ENCODE measurements at regions of chr1 and their contacts with region 1.

Region 1: GRCh38 chr1:208245185-208245705 is 1.1 kb upstream of the PLXNA2 start:
- DNase-seq: peak; percentile 89 to 98 (median 94)
- H3K4me3 ChIP-seq: peak overlapping the region in 2 of 4 donors; percentile 50 to 90
- H3K27ac ChIP-seq: peak overlapping the region in 3 of 5 donors; percentile 48 to 95 (median 83)
- H3K4me1 ChIP-seq: peaks cover 0 to 19% of the 10 kb centered on the region in 2 donors
- H3K27me3 ChIP-seq: no peaks in the 10 kb centered on the region
- CTCF ChIP-seq: peak; percentile 74 to 91 (median 84)
- POLR2A ChIP-seq: peak in 1 of 2 donors; percentile 21

Region 2: DNA sequence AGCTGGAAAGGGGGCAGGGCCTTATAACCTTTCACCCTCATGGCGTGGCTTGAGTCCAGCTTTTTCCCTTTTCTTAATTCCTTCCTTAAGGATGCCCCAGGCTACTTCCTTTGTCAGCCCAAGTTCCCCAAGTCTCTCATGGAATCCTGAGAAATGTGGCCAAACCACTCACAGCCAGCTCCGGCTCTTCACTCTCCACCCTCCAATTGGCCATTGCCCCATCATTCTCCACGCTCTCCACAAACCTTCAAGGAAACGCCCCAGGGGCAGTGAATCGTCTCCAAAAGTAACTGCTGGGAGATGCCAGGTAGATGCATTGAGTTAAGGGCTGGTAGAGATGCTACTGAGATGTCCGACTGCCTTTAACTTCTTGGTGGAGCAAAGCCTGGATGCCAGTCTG is 220.8 kb before region 1 on chr1:
- intact Hi-C with region 1: loop called (anchors 5 kb)
- DNase-seq: no peak
- H3K4me3 ChIP-seq: no peak overlapping the region
- H3K27ac ChIP-seq: no peak overlapping the region
- H3K4me1 ChIP-seq: peaks cover 0 to 4% of the 10 kb centered on the region in 2 donors
- H3K27me3 ChIP-seq: no peaks in the 10 kb centered on the region
- CTCF ChIP-seq: no peak
- POLR2A ChIP-seq: no peak

Region 3: GRCh38 chr1:208029381-208030287 is 215.6 kb before region 1 on chr1:
- intact Hi-C with region 1: loop called (anchors 5 kb)
- DNase-seq: peak in 1 of 7 donors; percentile 17
- H3K4me3 ChIP-seq: no peak overlapping the region
- H3K27ac ChIP-seq: peak overlapping the region in 2 of 5 donors; percentile 26 to 41
- H3K4me1 ChIP-seq: peaks cover 0 to 22% of the 10 kb centered on the region in 2 donors
- H3K27me3 ChIP-seq: no peaks in the 10 kb centered on the region
- CTCF ChIP-seq: no peak
- POLR2A ChIP-seq: no peak

Region 4: GRCh38 chr1:208132287-208132883 is 112.9 kb before region 1 on chr1:
- intact Hi-C with region 1: loop called (anchors 2 to 5 kb)
- DNase-seq: peak; percentile 66 to 84 (median 77)
- H3K4me3 ChIP-seq: no peak overlapping the region
- H3K27ac ChIP-seq: no peak overlapping the region
- H3K4me1 ChIP-seq: no peaks in the 10 kb centered on the region
- H3K27me3 ChIP-seq: no peaks in the 10 kb centered on the region
- CTCF ChIP-seq: peak; percentile 64 to 80 (median 74)
- POLR2A ChIP-seq: no peak

Measured in adrenal gland (tissue), 19 donors.